ENCODE measurements at regions of chr9 and their contacts with region 1.

Region 1: GRCh38 chr9:112074250-112075008 is 100.7 kb downstream of the SUSD1 start:
- DNase-seq: peak; percentile 74 to 77 (median 75)
- H3K4me3 ChIP-seq: no peak overlapping the region
- H3K4me3 Mint-ChIP-seq: peak overlapping the region; percentile 51 to 82 (median 74)
- H3K27ac ChIP-seq: no peak overlapping the region
- H3K27ac Mint-ChIP-seq: peak overlapping the region; percentile 20 to 82 (median 46)
- H3K4me1 ChIP-seq: peaks cover 26% of the 10 kb centered on the region
- H3K4me1 Mint-ChIP-seq: peaks cover 23 to 41% (median 29%) of the 10 kb centered on the region in 4 donors
- H3K27me3 ChIP-seq: no peaks in the 10 kb centered on the region
- H3K27me3 Mint-ChIP-seq: no peaks in the 10 kb centered on the region

Region 2: GRCh38 chr9:111759762-111760639 is 314.4 kb before region 1 on chr9:
- CTCF ChIA-PET with region 1: interaction called, 216 read pairs
- POLR2A ChIA-PET with region 1: interaction called, 7 read pairs
- intact Hi-C with region 1: loop called (anchors 1 kb)
- DNase-seq: peak; percentile 56 to 70 (median 68)
- H3K4me3 ChIP-seq: no peak overlapping the region
- H3K4me3 Mint-ChIP-seq: no peak overlapping the region
- H3K27ac ChIP-seq: no peak overlapping the region
- H3K27ac Mint-ChIP-seq: no peak overlapping the region
- H3K4me1 ChIP-seq: no peaks in the 10 kb centered on the region
- H3K4me1 Mint-ChIP-seq: peaks cover 0 to 4% (median 2%) of the 10 kb centered on the region in 4 donors
- H3K27me3 ChIP-seq: no peaks in the 10 kb centered on the region
- H3K27me3 Mint-ChIP-seq: no peaks in the 10 kb centered on the region

Region 3: DNA sequence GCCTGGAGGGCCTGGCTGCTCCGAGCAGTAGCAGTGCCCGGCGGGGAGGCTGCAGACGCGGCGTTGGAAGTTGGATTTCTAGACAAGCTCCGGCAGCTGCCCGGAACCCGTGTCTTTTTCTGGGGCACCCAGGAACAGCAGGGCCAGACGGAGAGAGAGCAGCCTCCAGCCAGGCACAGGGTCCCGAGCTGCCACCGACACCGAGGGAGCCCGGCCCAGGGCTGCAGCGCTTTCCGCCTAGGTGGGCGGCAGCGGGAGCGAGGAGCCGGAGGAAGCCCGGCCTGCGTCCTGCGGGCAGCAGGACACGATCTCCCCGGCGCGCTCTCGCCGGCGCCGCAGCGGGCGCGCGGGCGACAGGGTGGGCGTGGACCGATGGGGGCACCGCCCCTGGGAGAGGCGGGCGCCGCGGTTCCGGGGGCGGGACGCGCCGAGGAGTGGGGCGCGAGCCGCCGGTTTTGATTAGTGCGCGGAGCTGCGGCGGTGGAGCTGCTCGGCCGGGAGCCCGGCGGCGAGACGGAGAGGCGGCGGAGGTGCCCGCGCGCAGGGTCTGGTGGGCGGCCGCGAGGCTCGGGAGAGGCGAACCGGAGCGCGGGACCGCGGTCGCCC is 178.0 kb before region 1 on chr9 and contains the start of gene UGCG:
- CTCF ChIA-PET with region 1: interaction called, 19 read pairs
- POLR2A ChIA-PET with region 1: interaction called, 11 read pairs
- intact Hi-C with region 1: loop called (anchors 1 kb)
- DNase-seq: peak; percentile 84 to 92 (median 89)
- H3K4me3 ChIP-seq: peak within 1 kb of the TSS; percentile 87 to 97
- H3K4me3 Mint-ChIP-seq: peak within 1 kb of the TSS; percentile 90 to 96 (median 93)
- H3K27ac ChIP-seq: peak within 1 kb of the TSS; percentile 70
- H3K27ac Mint-ChIP-seq: peak within 1 kb of the TSS; percentile 91 to 97 (median 95)
- H3K4me1 ChIP-seq: peaks cover 58% of the 10 kb centered on the region
- H3K4me1 Mint-ChIP-seq: peaks cover 23 to 32% (median 31%) of the 10 kb centered on the region in 4 donors
- H3K27me3 ChIP-seq: no peaks in the 10 kb centered on the region
- H3K27me3 Mint-ChIP-seq: no peaks in the 10 kb centered on the region
- total RNA-seq, gene UGCG: 26.3 to 29.7 TPM

Region 4: DNA sequence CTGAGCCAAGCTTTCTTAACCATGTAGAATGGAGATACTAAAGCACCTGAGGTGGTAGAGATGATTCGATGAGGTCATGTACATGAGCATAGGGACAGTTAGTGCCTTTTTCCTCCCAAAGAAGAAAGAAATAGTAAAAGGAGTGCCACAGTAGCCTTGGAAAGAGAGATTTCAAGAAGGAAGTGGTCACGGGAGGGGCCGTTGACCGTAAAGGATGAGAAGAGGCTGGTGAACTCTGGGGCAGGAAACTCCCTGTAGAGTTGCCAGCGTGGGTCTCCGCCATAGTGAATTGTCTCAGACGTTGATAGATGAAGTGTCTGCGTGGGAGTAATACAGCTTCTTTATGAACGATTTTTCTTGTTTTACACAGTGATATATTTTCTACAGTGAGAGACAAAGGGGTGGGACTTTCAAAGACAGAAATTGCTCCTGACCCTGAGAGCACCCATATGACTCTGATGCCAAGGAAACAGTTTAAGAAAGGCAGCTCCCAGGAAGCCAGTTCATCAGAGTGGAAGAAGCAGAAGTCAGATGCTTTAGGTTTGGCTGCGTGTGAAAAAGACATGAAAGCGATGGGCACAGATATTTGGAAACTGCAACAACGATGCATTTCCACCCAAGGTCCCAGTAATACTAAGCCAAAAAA is 136.5 kb before region 1 on chr9:
- CTCF ChIA-PET with region 1: interaction called, 10 read pairs
- POLR2A ChIA-PET with region 1: no interaction called
- intact Hi-C with region 1: no loop called
- DNase-seq: peak; percentile 56 to 79 (median 60)
- H3K4me3 ChIP-seq: peak overlapping the region in 1 of 2 donors; percentile 42
- H3K4me3 Mint-ChIP-seq: peak overlapping the region; percentile 57 to 93 (median 82)
- H3K27ac ChIP-seq: peak overlapping the region; percentile 39
- H3K27ac Mint-ChIP-seq: peak overlapping the region; percentile 74 to 97 (median 96)
- H3K4me1 ChIP-seq: peaks cover 31% of the 10 kb centered on the region
- H3K4me1 Mint-ChIP-seq: peaks cover 25 to 41% (median 33%) of the 10 kb centered on the region in 4 donors
- H3K27me3 ChIP-seq: no peaks in the 10 kb centered on the region
- H3K27me3 Mint-ChIP-seq: no peaks in the 10 kb centered on the region

Region 5: DNA sequence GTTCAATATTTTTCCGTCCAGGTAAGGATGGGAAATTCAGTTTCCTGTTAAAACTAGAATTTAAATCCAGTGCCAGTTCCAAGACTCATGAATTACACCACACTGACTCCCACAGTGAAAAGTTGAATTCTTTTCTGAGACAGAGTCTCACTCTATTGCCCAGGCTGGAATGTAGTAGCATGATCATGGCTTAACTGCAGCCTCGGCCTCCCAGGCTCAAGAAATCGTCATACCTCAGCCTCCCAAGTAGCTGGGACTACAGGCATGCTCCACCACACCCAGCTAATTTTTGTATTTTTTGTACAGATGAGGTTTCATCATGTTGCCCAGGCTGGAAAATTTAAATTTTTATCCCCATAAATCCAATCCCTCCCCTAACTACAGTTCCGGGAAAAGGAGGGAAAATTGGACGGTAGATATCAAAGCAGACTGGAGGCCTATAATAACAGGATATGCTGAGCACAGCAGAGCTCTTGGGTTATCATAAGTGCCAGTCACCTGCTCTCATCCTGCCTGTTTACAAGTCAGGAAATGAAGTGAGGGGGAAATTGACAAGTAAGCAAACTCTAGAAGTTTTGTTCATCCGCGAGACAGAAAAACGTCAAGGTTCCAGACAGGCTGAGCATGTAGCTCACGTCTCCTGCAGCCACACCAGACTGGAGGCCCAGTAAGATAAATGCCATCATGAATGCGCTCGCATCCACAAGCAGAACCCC is 72.1 kb before region 1 on chr9:
- CTCF ChIA-PET with region 1: interaction called, 11 read pairs
- POLR2A ChIA-PET with region 1: no interaction called
- intact Hi-C with region 1: no loop called
- DNase-seq: peak in 4 of 5 donors; percentile 31 to 58 (median 46)
- H3K4me3 ChIP-seq: no peak overlapping the region
- H3K4me3 Mint-ChIP-seq: peak overlapping the region in 7 of 8 donors; percentile 29 to 70 (median 55)
- H3K27ac ChIP-seq: no peak overlapping the region
- H3K27ac Mint-ChIP-seq: peak overlapping the region; percentile 50 to 95 (median 81)
- H3K4me1 ChIP-seq: peaks cover 35% of the 10 kb centered on the region
- H3K4me1 Mint-ChIP-seq: peaks cover 14 to 34% (median 27%) of the 10 kb centered on the region in 4 donors
- H3K27me3 ChIP-seq: no peaks in the 10 kb centered on the region
- H3K27me3 Mint-ChIP-seq: no peaks in the 10 kb centered on the region

Region 6: DNA sequence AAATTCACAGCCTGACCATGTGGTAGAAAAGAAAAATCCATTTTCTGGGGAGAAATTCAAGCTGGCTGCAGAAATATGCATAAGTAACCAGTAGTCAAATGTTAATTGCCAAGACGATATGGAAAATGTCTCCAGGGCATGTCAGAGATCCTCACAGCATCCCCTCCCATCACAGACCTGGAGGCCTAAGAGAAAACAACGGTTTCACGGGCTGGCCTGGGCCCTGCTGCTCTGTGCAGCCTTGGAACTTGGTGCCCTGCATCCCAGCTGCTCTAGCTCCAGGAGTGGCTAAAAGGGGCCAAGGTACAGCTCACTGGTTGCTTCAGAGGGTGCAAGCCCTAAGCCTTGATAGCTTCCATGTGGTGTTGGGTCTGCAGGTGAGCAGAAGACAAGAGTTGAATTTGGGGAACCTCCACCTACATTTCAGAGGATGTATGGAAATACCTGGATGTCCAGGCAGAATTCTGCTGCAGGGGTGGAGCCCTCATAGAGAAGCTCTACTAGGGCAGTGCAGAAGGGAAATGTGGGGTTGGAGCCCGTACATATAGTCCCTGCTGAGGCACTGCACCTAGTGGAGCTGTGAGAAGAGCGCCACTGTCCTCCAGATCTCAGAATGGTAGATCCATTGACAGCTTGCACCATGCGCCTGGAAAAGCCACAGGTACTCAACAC is 209.3 kb after region 1 on chr9:
- CTCF ChIA-PET with region 1: no interaction called
- POLR2A ChIA-PET with region 1: no interaction called
- intact Hi-C with region 1: no loop called
- DNase-seq: peak in 1 of 5 donors; percentile 17
- H3K4me3 ChIP-seq: no peak overlapping the region
- H3K4me3 Mint-ChIP-seq: peak overlapping the region in 1 of 8 donors; percentile 17
- H3K27ac ChIP-seq: no peak overlapping the region
- H3K27ac Mint-ChIP-seq: peak overlapping the region in 3 of 7 donors; percentile 23 to 48 (median 30)
- H3K4me1 ChIP-seq: peaks cover 5% of the 10 kb centered on the region
- H3K4me1 Mint-ChIP-seq: peaks cover 17 to 42% (median 35%) of the 10 kb centered on the region in 4 donors
- H3K27me3 ChIP-seq: no peaks in the 10 kb centered on the region
- H3K27me3 Mint-ChIP-seq: no peaks in the 10 kb centered on the region